Heart left ventricle (tissue), 16 donors: ENCODE measurements at regions of chr12 and their contacts with region 1.

Region 1: DNA sequence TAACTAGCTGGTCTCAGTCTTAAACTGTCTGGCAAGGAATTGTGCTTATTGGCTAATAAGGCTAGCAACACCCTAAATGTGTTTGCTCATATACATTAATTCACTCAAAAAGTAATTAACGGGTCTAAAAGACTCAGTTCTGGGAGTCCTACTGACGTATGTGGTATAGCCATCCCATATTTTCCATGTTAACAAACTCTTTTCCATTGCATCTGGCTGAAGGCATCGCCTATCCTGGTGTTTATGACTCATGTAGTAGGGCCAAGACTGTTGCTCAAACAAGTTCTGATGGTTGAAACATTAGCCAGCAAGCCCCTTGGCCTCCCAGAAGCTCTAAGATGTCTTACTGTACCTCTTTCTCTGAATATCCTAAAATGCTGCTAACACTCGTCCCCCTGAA is 98.5 kb downstream of the PHLDA1 start:
- DNase-seq: no peak
- ATAC-seq: peak in 1 of 4 donors; percentile 66
- H3K4me3 ChIP-seq: no peak overlapping the region
- H3K27ac ChIP-seq: peak overlapping the region in 1 of 12 donors; percentile 53
- H3K4me1 ChIP-seq: peaks cover 4 to 30% (median 15%) of the 10 kb centered on the region in 12 donors
- H3K27me3 ChIP-seq: peaks cover 0 to 26% (median 0%) of the 10 kb centered on the region in 9 donors
- CTCF ChIP-seq: no peak
- POLR2A ChIP-seq: no peak

Region 2: DNA sequence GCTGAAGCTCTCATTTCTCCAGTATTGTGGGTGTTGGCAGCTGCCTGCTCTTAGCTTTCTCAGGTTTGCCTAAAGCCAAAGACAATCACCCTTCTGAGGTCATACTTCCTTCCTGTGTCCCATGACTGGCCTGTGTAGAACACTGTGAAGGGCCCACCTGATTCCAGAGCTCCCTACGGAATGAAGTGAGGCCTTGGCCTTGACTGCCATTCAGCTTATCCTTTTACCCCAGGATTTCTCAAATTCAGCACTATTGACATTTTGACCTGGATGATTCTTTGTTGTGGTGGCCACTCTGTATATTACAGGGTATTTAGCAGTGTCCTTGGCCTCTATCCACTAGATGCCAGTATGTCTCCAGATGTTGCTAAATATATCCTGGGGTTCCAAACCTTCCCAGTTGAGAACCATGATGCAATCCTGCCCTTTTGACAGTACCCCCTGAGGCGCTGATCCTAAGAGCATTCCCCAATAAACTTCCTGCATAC is 309.4 kb before region 1 on chr12:
- intact Hi-C with region 1: loop called in 1 of 10 experiments (anchors 10 kb)
- DNase-seq: peak in 1 of 5 donors; percentile 27
- ATAC-seq: peak; percentile 88 to 95 (median 94)
- H3K4me3 ChIP-seq: no peak overlapping the region
- H3K27ac ChIP-seq: peak overlapping the region in 3 of 12 donors; percentile 21 to 45 (median 36)
- H3K4me1 ChIP-seq: peaks cover 0 to 10% (median 0%) of the 10 kb centered on the region in 12 donors
- H3K27me3 ChIP-seq: no peaks in the 10 kb centered on the region
- CTCF ChIP-seq: peak in 10 of 12 donors; percentile 5 to 50 (median 38)
- POLR2A ChIP-seq: no peak

Region 3: DNA sequence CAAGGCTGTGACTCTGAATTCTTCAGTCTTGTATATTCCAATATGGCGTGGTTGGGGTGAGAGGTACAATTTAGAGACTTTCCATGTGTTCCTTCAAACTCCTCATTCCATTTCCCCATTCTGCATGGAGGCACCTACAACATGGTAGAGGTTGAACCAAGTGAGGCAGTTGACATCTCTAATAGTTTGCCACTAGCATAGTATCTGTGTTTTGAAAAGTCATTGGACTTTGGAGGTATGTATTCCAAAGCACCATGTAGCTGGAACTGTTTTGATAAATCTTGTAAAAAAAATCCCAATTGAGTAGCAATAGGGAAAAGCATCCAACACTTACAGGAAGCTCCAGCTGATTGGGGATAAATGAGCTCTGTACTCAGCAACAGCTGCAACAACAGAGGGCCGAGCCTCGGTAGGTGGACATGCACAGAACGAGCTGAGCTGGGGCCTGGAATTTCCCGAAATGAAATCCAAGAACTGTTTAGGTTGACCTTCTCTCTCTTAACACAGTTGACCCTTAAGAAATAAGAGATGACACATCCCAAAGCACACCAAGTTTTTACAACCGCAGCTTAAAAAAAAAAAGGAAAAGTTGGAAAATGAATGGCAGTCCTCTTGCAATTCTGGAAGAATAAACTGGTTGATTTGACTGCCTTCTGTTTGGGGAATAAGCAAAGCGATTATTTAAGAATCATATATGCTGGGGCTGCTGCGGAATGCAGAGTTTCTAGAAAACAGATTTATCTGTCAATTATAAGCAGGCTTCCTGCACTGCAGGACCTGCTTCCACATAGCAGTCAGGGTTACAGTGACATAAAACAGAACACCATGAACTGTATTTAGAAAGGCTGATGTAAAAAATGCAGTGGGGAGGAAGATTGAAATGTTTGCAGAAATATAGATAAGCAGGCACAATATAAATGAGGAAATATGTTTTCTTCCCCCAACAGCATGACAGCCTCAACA is 227.1 kb before region 1 on chr12:
- intact Hi-C with region 1: loop called in 1 of 10 experiments (anchors 10 kb)
- DNase-seq: peak; percentile 52 to 70 (median 66)
- ATAC-seq: peak; percentile 85 to 89 (median 86)
- H3K4me3 ChIP-seq: peak overlapping the region in 1 of 12 donors; percentile 12
- H3K27ac ChIP-seq: peak overlapping the region; percentile 31 to 86 (median 74)
- H3K4me1 ChIP-seq: peaks cover 0 to 53% (median 44%) of the 10 kb centered on the region in 12 donors
- H3K27me3 ChIP-seq: no peaks in the 10 kb centered on the region
- CTCF ChIP-seq: no peak
- POLR2A ChIP-seq: no peak

Region 4: GRCh38 chr12:75722714-75723200 is 210.3 kb before region 1 on chr12:
- intact Hi-C with region 1: loop called in 1 of 10 experiments (anchors 10 kb)
- DNase-seq: peak in 4 of 5 donors; percentile 44 to 72 (median 54)
- ATAC-seq: peak; percentile 33 to 88 (median 82)
- H3K4me3 ChIP-seq: no peak overlapping the region
- H3K27ac ChIP-seq: peak overlapping the region; percentile 39 to 80 (median 75)
- H3K4me1 ChIP-seq: peaks cover 9 to 57% (median 42%) of the 10 kb centered on the region in 12 donors
- H3K27me3 ChIP-seq: no peaks in the 10 kb centered on the region
- CTCF ChIP-seq: no peak
- POLR2A ChIP-seq: no peak

Region 5: DNA sequence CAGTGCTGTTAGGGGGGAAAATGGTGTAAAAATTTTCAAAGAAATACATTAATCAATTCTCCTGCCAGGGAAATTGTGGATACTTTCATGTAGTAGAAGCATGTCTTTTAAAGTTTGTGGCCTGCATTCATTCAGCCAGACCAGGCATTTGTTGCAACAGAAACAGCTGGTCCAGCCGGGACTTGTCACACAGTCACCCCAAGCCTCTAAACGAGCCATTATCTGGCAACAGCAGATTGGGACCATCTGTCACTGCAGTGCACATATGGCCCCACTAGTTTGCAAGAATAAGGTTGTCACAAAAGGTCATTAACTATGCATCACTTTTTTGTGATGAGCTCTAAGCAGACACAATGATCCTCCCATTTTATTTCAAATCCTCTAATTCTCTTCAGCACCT is 95.4 kb before region 1 on chr12:
- intact Hi-C with region 1: loop called in 1 of 10 experiments (anchors 10 kb)
- DNase-seq: peak in 3 of 5 donors; percentile 20 to 68 (median 30)
- ATAC-seq: peak in 3 of 4 donors; percentile 33 to 52 (median 38)
- H3K4me3 ChIP-seq: no peak overlapping the region
- H3K27ac ChIP-seq: peak overlapping the region in 1 of 12 donors; percentile 18
- H3K4me1 ChIP-seq: peaks cover 0 to 13% (median 3%) of the 10 kb centered on the region in 12 donors
- H3K27me3 ChIP-seq: no peaks in the 10 kb centered on the region
- CTCF ChIP-seq: no peak
- POLR2A ChIP-seq: no peak

Region 6: DNA sequence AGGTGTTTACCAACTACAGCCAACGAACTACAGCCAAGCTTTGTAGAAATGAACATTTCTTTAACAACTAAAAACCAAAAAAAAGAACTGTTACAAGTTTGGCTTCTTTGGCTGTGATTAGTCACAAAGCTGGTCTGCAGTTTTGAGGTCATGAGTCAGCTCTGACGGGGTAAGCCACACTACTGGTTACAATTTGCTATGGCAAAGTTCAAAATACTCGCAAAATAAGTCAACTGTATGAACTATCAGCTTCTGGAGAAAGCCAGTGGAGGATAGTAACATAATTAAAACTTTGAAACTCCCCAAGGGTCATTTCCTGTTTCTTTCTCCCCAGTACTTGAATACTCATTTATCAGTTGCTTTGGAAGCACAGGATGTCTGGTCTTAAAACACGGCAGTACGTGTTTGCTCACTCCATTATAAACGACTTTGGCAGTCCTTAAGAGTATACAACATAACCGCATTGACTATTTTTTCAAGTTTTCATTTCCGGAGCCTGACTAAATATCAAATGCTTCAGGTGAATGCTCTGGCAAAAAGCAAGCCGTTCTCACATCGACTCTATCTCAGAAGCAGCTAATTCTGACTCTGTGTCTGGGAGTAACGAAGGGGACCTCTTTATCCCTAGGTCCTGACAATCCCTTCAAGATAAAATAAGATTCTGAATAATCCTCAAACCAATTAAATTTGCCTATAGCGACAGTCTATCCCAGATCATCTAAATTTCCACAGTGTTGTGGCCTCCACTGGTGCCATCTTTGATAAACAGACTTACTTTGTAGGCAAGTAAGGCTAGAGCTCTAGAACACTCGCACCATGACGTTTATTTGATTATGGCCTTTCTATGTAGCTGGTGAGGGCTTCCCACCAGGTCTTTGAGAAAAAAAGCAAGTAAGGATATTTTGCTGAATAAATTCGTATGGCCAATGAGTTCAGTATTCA is 87.9 kb after region 1 on chr12:
- intact Hi-C with region 1: loop called in 3 of 10 experiments (anchors 5 to 10 kb)
- DNase-seq: no peak
- ATAC-seq: peak in 2 of 4 donors; percentile 14 to 73
- H3K4me3 ChIP-seq: no peak overlapping the region
- H3K27ac ChIP-seq: peak overlapping the region in 8 of 12 donors; percentile 19 to 80 (median 42)
- H3K4me1 ChIP-seq: peaks cover 0 to 27% (median 2%) of the 10 kb centered on the region in 12 donors
- H3K27me3 ChIP-seq: no peaks in the 10 kb centered on the region
- CTCF ChIP-seq: no peak
- POLR2A ChIP-seq: no peak